ENCODE measurements at regions of chr4 and their contacts with region 1.

Region 1: GRCh38 chr4:1266881-1267763 is 18.2 kb upstream of the CTBP1 start:
- DNase-seq: no peak
- H3K4me3 Mint-ChIP-seq: peak overlapping the region; percentile 61
- H3K27ac Mint-ChIP-seq: peak overlapping the region; percentile 95
- H3K4me1 Mint-ChIP-seq: peaks cover 27% of the 10 kb centered on the region
- H3K27me3 Mint-ChIP-seq: no peaks in the 10 kb centered on the region

Region 2: GRCh38 chr4:1167247-1167949 is 99.7 kb before region 1 on chr4:
- CTCF ChIA-PET with region 1: interaction called, 10 read pairs
- POLR2A ChIA-PET with region 1: no interaction called
- DNase-seq: peak; percentile 93
- H3K4me3 Mint-ChIP-seq: peak overlapping the region; percentile 79
- H3K27ac Mint-ChIP-seq: peak overlapping the region; percentile 69
- H3K4me1 Mint-ChIP-seq: peaks cover 35% of the 10 kb centered on the region
- H3K27me3 Mint-ChIP-seq: peaks cover 12% of the 10 kb centered on the region

Region 3: GRCh38 chr4:1249148-1249730 is 17.9 kb before region 1 on chr4:
- CTCF ChIA-PET with region 1: interaction called, 22 read pairs
- POLR2A ChIA-PET with region 1: no interaction called
- DNase-seq: peak; percentile 80
- H3K4me3 Mint-ChIP-seq: peak overlapping the region; percentile 81
- H3K27ac Mint-ChIP-seq: peak overlapping the region; percentile 96
- H3K4me1 Mint-ChIP-seq: peaks cover 69% of the 10 kb centered on the region
- H3K27me3 Mint-ChIP-seq: no peaks in the 10 kb centered on the region

Region 4: DNA sequence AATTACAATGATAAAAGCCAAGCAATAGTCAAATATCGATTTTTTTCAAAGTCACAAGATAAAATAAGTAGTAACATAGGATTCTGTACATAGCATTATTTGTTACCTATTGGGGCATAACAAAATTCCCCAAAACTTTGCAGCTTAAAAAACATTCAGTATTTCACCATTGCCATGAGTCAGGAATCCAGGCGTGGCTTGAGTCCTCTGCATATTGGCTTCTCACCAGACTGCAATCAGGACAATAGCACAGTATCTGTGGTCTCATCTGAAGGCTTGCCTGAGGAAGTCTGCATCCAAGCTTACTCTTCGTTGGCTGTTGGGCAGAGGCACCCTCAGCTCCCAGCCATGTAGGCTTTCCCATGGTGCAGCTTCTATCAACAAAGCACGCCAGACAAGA is 12.0 kb before region 1 on chr4:
- CTCF ChIA-PET with region 1: interaction called, 22 read pairs
- POLR2A ChIA-PET with region 1: no interaction called
- DNase-seq: no peak
- H3K4me3 Mint-ChIP-seq: no peak overlapping the region
- H3K27ac Mint-ChIP-seq: no peak overlapping the region
- H3K4me1 Mint-ChIP-seq: peaks cover 68% of the 10 kb centered on the region
- H3K27me3 Mint-ChIP-seq: no peaks in the 10 kb centered on the region

Region 5: DNA sequence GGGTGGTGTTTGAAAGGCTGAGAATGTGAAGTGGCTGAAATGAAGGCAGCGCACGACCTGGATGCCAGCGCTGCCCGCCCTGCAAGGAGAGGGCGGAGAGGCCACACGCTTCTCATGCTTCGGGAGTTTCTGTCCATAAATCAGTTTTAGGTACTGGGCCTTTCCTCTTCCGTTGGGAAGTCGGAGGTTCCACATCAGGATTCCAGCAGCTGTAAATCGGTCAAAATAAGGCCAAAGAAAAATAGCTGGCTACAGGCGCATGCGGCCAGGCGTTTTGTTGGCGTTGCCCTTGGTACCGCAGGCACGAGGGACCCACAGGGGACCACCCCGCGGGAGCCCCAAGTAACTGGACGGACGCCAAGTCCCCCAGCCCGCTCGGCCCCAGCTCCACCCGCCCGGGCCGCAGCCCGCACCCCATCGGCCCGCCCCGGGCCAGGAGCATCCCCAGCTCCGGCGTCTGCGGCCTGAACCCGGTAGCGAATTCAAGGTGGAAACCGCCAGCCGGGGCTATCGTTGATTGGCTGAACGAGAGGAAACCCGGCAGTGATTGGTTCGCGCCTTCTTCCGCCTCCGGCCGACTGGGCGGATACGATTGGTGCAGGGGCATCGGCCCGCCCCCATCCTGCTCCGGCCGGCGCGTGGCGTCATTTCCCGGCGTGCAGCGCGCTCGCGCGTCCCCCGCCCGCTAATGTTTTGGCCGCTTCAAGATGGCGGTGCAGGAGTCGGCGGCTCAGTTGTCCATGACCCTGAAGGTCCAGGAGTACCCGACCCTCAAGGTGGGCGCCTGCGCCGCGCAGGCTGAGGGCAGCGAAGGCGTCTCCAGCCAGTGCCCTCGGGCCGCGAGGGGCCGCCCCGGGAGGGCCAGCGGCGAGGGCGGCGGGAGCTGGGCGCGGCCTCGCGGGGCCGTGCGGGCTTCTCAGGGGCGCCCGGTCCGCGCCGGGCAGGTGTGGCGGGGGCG is 22.4 kb after region 1 on chr4 and contains the start of gene MAEA:
- CTCF ChIA-PET with region 1: interaction called, 11 read pairs
- POLR2A ChIA-PET with region 1: interaction called, 6 read pairs
- DNase-seq: peak; percentile 98
- H3K4me3 Mint-ChIP-seq: peak within 1 kb of the TSS; percentile 85
- H3K27ac Mint-ChIP-seq: peak within 1 kb of the TSS; percentile 91
- H3K4me1 Mint-ChIP-seq: peaks cover 37% of the 10 kb centered on the region
- H3K27me3 Mint-ChIP-seq: no peaks in the 10 kb centered on the region
- total RNA-seq, gene MAEA: 63.8 to 69.0 TPM

Region 6: GRCh38 chr4:1346781-1347409 is 79.8 kb after region 1 on chr4 and contains the start of gene UVSSA:
- CTCF ChIA-PET with region 1: interaction called, 10 read pairs
- POLR2A ChIA-PET with region 1: no interaction called
- DNase-seq: peak; percentile 100
- H3K4me3 Mint-ChIP-seq: peak within 1 kb of the TSS; percentile 92
- H3K27ac Mint-ChIP-seq: peak within 1 kb of the TSS; percentile 98
- H3K4me1 Mint-ChIP-seq: peaks cover 45% of the 10 kb centered on the region
- H3K27me3 Mint-ChIP-seq: no peaks in the 10 kb centered on the region
- total RNA-seq, gene UVSSA: 19.1 to 23.0 TPM